Endothelial cell of umbilical vein (primary cell): ENCODE measurements at regions of chr14 and their contacts with region 1.

Region 1: GRCh38 chr14:92589213-92589852 is 75.8 kb downstream of the RIN3 start:
- DNase-seq: no peak
- H3K4me3 ChIP-seq: no peak overlapping the region
- H3K27ac ChIP-seq: no peak overlapping the region
- H3K4me1 ChIP-seq: no peaks in the 10 kb centered on the region
- H3K27me3 ChIP-seq: no peaks in the 10 kb centered on the region
- CTCF ChIP-seq: peak in 1 of 2 donors; percentile 13
- POLR2A ChIP-seq: no peak

Region 2: GRCh38 chr14:91399868-91400640 is 1189.3 kb before region 1 on chr14:
- CTCF ChIA-PET with region 1: no interaction called
- POLR2A ChIA-PET with region 1: no interaction called
- dilution Hi-C with region 1: no loop called
- intact Hi-C with region 1: no loop called
- DNase-seq: no peak
- H3K4me3 ChIP-seq: no peak overlapping the region
- H3K27ac ChIP-seq: peak overlapping the region; percentile 18
- H3K4me1 ChIP-seq: peaks cover 41% of the 10 kb centered on the region
- H3K27me3 ChIP-seq: no peaks in the 10 kb centered on the region
- CTCF ChIP-seq: no peak
- POLR2A ChIP-seq: no peak

Region 3: DNA sequence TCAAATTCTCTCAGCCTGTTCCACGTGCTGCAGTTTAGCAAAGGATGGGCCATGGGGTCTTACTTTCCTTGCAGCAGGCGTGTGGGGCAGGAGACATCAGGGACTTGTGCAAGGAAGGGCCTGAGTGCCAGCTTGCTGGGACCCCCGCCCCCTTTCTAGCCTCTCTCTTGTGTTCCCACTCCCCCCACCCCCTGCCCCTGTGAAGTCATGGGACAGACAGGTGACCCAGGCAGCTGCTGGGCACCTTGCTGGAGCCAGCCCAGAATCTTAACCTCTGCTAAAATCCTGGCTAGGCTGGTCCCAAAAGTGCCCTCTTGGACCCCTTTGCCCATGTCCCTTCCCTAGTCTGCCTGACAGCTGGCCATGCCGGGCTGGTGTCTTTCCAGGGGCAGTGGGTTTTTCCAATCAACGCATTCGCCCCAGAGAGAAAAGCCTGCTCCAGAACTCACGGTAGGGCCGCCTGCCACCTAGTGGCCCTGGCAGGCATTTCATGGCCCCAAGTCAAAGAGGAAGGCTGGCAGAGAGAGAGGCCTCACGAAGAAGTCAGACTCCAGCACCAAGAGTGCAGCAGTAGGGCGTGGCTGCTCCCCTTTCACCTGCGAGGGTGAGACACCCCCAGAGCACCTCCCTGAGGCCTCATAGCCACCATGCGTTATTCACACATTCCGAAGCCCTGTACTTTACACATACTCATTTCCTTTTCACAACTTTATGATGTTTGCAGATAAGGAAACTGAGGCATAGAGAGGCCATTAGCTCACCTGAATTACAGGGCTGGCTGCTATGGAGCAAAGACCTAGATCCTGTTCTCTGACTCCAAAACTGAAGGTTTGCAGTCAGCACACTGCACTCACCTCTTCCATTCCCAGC is 91.7 kb after region 1 on chr14:
- CTCF ChIA-PET with region 1: interaction called, 13 read pairs
- POLR2A ChIA-PET with region 1: no interaction called
- dilution Hi-C with region 1: no loop called
- intact Hi-C with region 1: loop called (anchors 2 kb)
- DNase-seq: peak; percentile 71
- H3K4me3 ChIP-seq: no peak overlapping the region
- H3K27ac ChIP-seq: no peak overlapping the region
- H3K4me1 ChIP-seq: peaks cover 4% of the 10 kb centered on the region
- H3K27me3 ChIP-seq: no peaks in the 10 kb centered on the region
- CTCF ChIP-seq: peak; percentile 89 to 94
- POLR2A ChIP-seq: no peak